Activated naive CD4-positive, alpha-beta T cell treated with anti-CD3 and anti-CD28 coated beads for 36 hours (primary cell): ENCODE measurements at regions of chr2 and their contacts with region 1.

Region 1: DNA sequence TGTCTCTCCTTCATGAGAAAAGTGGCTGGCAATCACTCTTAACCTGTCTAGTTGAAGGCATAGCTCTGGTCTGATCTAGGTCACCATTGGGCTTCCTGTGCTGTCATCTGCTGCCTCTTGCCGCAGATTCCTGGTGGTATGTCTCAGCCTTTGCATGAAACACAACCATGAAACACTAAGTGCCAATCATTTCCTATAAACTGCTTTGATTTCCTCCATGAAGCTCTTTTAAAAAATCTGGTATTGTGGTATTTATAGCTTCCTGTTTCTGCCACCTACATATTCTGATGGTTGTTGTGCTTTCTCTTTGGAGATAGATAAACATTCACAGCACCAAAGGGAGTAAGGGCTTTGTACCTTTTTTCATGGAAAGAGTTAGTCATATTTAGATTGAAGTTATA is 120.0 kb upstream of the EPC2 start:
- DNase-seq: peak; percentile 87
- H3K4me3 Mint-ChIP-seq: peak overlapping the region; percentile 14
- H3K27ac Mint-ChIP-seq: peak overlapping the region; percentile 94
- H3K4me1 Mint-ChIP-seq: peaks cover 85% of the 10 kb centered on the region
- H3K27me3 Mint-ChIP-seq: no peaks in the 10 kb centered on the region

Region 2: DNA sequence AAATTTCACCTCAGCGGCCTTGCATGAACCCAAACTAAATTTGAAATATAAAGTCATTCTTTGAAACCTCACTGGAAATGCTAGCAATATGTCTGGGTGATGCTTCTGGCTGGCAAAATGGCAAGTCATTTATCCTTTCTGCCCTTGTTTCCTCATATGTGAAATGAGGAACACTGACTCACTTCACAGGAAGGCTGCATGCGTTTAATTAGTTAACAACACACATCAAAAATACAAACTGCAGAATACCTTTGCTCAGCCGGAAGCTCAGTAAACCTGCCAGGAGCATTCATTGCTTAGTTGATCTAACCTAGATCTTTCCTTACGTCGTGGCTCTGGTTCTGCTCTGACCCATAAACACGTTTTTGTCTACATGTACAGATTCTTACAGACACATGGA is 893.9 kb before region 1 on chr2:
- CTCF ChIA-PET with region 1: no interaction called
- intact Hi-C with region 1: loop called (anchors 1 kb)
- DNase-seq: peak; percentile 50
- H3K4me3 Mint-ChIP-seq: no peak overlapping the region
- H3K27ac Mint-ChIP-seq: peak overlapping the region; percentile 80
- H3K4me1 Mint-ChIP-seq: peaks cover 22% of the 10 kb centered on the region
- H3K27me3 Mint-ChIP-seq: no peaks in the 10 kb centered on the region

Region 3: GRCh38 chr2:148303161-148303560 is 221.4 kb before region 1 on chr2:
- CTCF ChIA-PET with region 1: no interaction called
- intact Hi-C with region 1: no loop called
- DNase-seq: no peak
- H3K4me3 Mint-ChIP-seq: no peak overlapping the region
- H3K27ac Mint-ChIP-seq: no peak overlapping the region
- H3K4me1 Mint-ChIP-seq: no peaks in the 10 kb centered on the region
- H3K27me3 Mint-ChIP-seq: no peaks in the 10 kb centered on the region

Region 4: DNA sequence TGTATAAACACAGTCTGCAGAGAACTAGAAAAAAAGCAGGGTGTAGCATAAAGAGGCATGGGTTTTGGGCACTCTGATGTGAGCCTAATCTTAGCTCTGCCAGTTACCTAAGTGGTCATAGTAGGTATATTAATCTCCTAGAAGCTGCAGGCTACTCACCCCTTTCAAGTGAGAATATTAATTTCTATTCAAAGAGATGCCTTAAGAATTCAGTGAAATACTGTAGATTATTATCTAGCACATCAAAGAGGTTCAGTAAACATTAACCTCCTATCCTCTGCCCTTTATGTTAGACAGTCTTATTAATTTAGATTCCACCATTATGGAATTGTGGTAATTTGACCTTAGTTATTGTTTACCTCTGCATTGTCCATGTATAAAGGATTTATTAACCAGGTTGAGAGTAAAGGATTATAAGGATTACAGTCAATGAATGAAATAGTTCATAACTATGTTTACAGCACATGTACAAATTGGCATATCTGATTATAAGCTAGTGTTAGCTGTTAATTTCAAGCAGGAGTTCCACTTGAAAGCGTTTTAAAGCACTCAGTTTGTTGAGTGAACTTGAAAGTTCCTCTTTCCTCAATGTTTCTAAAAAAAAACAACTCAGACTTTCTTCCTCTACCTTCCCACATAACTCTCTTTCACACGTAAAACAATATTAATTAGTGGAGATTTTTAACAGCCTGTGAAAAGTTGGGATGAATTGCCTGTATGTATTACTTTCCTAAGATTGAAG is 30.5 kb before region 1 on chr2:
- CTCF ChIA-PET with region 1: no interaction called
- intact Hi-C with region 1: no loop called
- DNase-seq: no peak
- H3K4me3 Mint-ChIP-seq: no peak overlapping the region
- H3K27ac Mint-ChIP-seq: no peak overlapping the region
- H3K4me1 Mint-ChIP-seq: peaks cover 13% of the 10 kb centered on the region
- H3K27me3 Mint-ChIP-seq: no peaks in the 10 kb centered on the region

Region 5: GRCh38 chr2:148545390-148546256 is 21.1 kb after region 1 on chr2:
- CTCF ChIA-PET with region 1: interaction called, 3 read pairs
- intact Hi-C with region 1: loop called (anchors 1 kb)
- DNase-seq: peak; percentile 72
- H3K4me3 Mint-ChIP-seq: no peak overlapping the region
- H3K27ac Mint-ChIP-seq: peak overlapping the region; percentile 88
- H3K4me1 Mint-ChIP-seq: peaks cover 43% of the 10 kb centered on the region
- H3K27me3 Mint-ChIP-seq: no peaks in the 10 kb centered on the region

Region 6: GRCh38 chr2:148614322-148615049 is 90.0 kb after region 1 on chr2:
- CTCF ChIA-PET with region 1: no interaction called
- intact Hi-C with region 1: loop called (anchors 1 kb)
- DNase-seq: peak; percentile 43
- H3K4me3 Mint-ChIP-seq: no peak overlapping the region
- H3K27ac Mint-ChIP-seq: no peak overlapping the region
- H3K4me1 Mint-ChIP-seq: peaks cover 11% of the 10 kb centered on the region
- H3K27me3 Mint-ChIP-seq: no peaks in the 10 kb centered on the region

Region 7: DNA sequence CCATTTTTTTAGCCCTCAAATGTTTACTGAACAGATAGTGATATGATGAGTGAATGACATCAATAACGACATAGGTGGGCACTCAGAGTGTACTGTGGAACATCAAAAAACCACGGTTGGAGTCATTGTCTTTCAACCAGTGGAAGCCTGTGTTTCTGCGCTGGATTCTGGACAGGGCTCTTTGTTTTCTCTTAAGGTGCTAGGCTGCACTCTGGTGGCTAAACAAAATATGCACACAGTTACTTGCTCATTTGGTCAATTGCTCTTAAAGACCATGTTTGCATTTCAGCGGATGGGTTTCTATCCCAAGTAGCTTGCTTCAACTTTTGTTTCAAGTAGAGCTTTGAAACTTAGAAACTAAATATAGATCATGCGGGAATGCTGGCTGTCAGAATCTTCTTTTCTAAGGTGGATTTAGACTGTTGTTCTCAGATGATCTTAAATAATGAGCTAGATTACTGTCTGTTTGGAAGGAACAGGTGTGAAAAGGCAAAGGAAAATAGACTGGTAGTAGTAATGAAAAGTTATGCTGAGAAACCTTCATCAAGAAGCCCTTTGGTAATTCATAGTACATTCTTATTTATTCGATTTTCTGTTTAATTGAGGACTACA is 465.5 kb after region 1 on chr2:
- CTCF ChIA-PET with region 1: interaction called, 4 read pairs
- intact Hi-C with region 1: loop called (anchors 5 kb)
- DNase-seq: peak; percentile 70
- H3K4me3 Mint-ChIP-seq: no peak overlapping the region
- H3K27ac Mint-ChIP-seq: no peak overlapping the region
- H3K4me1 Mint-ChIP-seq: no peaks in the 10 kb centered on the region
- H3K27me3 Mint-ChIP-seq: no peaks in the 10 kb centered on the region